ENCODE measurements at regions of chr5 and their contacts with region 1.

Region 1: DNA sequence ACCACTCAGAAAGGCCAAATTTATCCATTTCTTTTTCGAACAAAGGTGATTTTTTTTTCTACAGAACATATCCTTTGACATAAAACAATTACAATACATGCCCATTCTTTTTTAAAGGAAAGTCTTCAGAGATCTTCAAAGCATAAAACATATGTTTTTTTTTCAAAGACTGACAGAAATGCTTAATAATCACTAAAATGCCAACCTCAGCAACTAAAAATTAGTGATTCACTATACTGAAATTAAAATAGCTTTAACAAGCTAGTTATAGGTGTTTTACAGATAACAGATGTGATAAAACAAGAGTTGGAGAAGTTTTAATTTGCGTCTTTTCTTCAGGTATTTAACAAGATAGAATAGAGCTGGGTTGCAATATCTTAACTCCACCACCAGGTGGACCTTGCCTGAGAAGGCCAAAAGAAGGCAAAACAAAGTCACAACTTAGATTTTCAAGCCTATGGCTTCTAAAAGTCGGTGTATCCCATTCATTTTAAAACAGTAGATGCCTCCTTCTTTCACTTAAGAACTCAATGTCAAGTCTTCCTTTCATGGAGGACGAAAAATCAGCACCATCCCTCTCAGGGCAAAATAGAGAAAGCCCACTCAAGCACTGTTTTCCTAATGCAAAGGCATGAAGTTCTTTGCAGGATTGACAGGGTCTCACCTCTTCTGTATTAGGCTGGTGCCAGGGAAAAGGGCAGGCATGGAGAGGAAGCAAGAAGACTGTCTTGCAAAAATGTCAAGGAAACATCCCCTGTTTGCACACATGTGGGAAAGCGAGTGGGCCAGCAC is 31.1 kb upstream of the CPLX2 start:
- DNase-seq: no peak
- H3K4me3 ChIP-seq: no peak overlapping the region
- H3K27ac ChIP-seq: no peak overlapping the region
- H3K4me1 ChIP-seq: peaks cover 0 to 27% (median 19%) of the 10 kb centered on the region in 4 experiments; a peak in 6 of 7 replicates
- H3K27me3 ChIP-seq: no peaks in the 10 kb centered on the region; a peak in 1 of 7 replicates
- CTCF ChIP-seq: peak in 2 of 3 experiments; percentile 37 to 62; a peak in 2 of 4 replicates
- EP300 ChIP-seq: no peak
- POLR2A ChIP-seq: no peak
- RAD21 ChIP-seq: peak; percentile 17 to 39; a peak in 2 of 4 replicates

Region 2: DNA sequence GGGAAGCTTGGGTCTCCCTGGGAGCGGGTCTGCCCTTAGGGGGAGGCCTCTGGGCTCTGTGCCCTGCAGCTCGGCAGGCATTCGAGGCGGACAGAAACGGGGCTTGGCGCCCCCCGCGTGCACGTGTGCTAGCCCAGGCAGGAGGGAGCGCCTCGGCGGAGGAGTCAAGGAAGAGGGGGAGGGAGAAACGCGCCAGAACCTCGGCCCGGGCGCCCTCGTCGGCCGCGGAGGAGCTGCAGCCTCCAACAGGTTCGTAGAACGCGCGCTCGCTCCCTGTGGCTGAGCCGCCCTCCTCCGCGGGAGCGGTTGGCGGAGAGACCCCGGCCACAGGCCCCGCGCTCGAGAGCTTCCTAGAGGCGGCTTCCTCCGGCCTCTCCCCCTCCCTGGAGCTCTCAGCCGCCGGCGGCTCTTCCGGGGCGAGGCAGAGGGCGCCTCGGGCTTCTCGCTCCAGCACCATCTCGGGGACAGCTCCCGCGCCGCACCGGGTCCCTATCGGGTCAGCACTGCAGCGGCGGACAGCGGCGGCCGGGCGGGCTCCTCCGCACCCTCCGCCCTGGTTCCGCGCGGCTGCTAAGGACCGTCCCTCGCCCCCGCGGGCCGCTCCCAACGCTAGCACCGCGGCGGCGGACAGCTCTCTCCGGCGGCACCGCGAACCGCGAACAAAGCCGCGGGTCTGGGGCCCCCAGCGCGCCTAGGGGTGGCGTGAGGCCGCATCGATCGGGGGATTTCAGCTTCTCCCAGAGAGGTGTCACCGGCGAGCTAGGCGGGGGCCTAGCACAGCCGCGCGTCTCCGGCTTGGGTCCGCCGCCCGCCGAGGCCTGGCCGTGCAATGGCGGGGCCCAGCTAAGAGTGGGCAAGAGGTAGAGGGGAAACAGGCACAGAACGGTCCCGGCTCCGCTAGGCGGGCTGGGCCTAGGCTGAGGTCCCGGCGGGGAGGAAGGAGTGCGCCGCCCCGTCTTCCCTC is 43.4 kb before region 1 on chr5:
- CTCF ChIA-PET with region 1: interaction called, 16 read pairs
- POLR2A ChIA-PET with region 1: no interaction called
- DNase-seq: peak; percentile 56 to 95
- H3K4me3 ChIP-seq: peak overlapping the region; percentile 24 to 78 (median 60)
- H3K27ac ChIP-seq: no peak overlapping the region
- H3K4me1 ChIP-seq: peaks cover 2 to 12% (median 9%) of the 10 kb centered on the region in 4 experiments; a peak in 5 of 7 replicates
- H3K27me3 ChIP-seq: peaks cover 4 to 12% (median 8%) of the 10 kb centered on the region in 4 experiments; a peak in 6 of 7 replicates
- CTCF ChIP-seq: no peak
- EP300 ChIP-seq: peak in 1 of 2 experiments; percentile 91; a peak in 2 of 3 replicates
- POLR2A ChIP-seq: no peak
- RAD21 ChIP-seq: peak in 1 of 2 experiments; percentile 20; a peak in 1 of 4 replicates

Region 3: DNA sequence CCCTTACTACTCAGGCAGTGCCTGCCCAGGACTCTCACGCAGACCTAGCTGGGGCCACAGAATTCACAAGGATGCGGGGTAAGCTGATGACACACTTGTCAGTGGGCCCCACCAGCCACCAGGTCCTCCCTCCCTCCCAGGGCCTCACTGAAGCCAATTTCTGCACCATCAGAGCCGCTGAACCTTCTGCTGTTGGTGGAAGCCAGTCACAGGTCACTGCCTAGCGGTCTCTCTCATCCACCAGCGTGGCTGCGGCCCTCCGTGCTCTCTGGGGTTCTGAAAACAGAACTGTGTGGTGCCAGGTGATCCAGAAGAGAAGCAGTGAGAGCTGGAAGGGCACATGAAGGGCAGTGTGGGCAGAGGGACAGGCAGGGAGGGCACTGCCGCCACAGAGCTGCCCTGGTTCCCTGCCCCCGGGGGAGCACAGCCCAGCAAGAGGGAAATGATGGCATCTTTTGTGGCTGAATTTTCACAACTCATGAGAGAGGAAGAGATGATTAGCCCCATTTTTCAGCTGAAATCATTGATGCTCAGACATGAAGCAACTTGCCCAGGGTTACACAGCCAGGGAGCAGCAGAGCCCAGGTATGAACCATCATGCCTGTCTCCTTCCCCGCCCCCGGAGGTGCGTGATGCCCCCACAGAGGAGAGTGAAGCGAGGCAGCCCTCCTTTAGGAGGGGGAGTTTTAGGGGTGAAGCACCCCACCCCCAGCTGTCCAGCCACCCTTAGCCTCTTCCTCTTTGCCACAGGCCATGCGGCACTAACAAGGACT is 10.2 kb before region 1 on chr5:
- CTCF ChIA-PET with region 1: interaction called, 18 read pairs
- POLR2A ChIA-PET with region 1: interaction called, 3 read pairs
- DNase-seq: no peak
- H3K4me3 ChIP-seq: no peak overlapping the region
- H3K27ac ChIP-seq: no peak overlapping the region
- H3K4me1 ChIP-seq: peaks cover 0 to 8% (median 3%) of the 10 kb centered on the region in 4 experiments; a peak in 3 of 7 replicates
- H3K27me3 ChIP-seq: no peaks in the 10 kb centered on the region
- CTCF ChIP-seq: no peak
- EP300 ChIP-seq: no peak
- POLR2A ChIP-seq: no peak
- RAD21 ChIP-seq: no peak

Region 4: DNA sequence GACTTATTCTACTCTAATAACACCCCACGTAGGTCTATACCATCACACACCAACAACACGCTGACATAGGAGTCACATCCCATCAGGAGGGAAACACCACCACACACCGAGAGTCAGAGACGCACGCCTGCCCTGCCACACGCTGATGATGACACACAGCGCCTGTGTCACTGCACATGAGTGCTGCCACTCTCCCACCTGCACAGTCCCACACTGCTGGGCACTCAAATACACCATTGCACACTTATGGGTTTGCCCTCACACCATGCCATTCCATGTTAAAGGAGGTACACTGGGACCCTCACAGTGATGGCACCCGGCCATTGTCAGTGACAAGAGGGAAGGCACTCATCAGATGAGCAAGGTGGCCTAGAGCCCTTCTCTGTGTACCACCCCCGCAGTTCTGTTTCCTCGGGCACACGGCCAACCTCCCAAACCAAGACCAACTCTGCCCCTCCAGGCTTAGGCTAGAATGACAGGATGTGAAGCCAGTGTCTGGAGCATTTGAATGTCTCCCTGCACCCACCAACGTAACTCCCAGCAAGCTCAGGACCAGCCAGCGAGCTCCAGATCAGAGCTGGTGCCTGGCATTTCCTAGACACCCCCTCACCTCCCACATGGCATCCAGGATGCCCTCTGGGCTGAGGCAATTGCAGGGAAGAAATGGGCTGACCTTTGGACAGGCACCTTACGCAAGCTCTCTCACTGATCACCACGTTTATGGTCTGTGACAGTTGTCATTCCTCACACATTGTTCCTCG is 27.5 kb after region 1 on chr5:
- CTCF ChIA-PET with region 1: interaction called, 43 read pairs
- POLR2A ChIA-PET with region 1: no interaction called
- DNase-seq: peak in 1 of 2 experiments; percentile 65
- H3K4me3 ChIP-seq: no peak overlapping the region
- H3K27ac ChIP-seq: no peak overlapping the region
- H3K4me1 ChIP-seq: peaks cover 9 to 13% (median 11%) of the 10 kb centered on the region in 4 experiments; a peak in 6 of 7 replicates
- H3K27me3 ChIP-seq: peaks cover 0 to 13% (median 3%) of the 10 kb centered on the region in 4 experiments; a peak in 3 of 7 replicates
- CTCF ChIP-seq: peak; percentile 71 to 86 (median 78)
- EP300 ChIP-seq: no peak
- POLR2A ChIP-seq: no peak
- RAD21 ChIP-seq: peak; percentile 82 to 87

Region 5: GRCh38 chr5:175889910-175890684 is 49.9 kb after region 1 on chr5:
- CTCF ChIA-PET with region 1: interaction called, 11 read pairs
- POLR2A ChIA-PET with region 1: interaction called, 3 read pairs
- DNase-seq: no peak
- H3K4me3 ChIP-seq: no peak overlapping the region
- H3K27ac ChIP-seq: no peak overlapping the region
- H3K4me1 ChIP-seq: peaks cover 0 to 6% (median 3%) of the 10 kb centered on the region in 4 experiments; a peak in 5 of 7 replicates
- H3K27me3 ChIP-seq: no peaks in the 10 kb centered on the region
- CTCF ChIP-seq: no peak
- EP300 ChIP-seq: no peak
- POLR2A ChIP-seq: no peak
- RAD21 ChIP-seq: no peak